ENCODE measurements at regions of chr3 and their contacts with region 1.

Region 1: DNA sequence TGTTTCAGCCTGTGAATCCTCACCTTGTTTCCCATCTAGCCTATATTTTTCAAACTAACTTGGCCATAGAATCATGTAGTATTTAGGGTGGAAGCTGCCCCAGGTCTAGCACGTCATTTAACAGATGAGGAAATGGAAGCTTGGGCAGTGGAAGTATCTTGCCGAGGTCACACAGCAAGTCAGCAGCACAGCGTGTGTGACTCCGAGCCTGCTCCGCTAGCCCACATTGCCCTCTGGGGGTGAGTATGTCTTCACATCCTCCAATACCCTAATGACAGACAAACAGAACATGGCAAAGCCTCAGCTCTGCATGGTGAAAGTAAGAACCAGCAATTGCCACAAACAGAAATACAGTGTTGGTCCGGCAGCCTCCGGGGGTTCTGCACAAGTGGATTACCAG is 2.2 kb upstream of the CCR5 start:
- ATAC-seq: peak in 1 of 8 experiments; percentile 64
- H3K4me3 ChIP-seq: no peak overlapping the region
- H3K27ac ChIP-seq: no peak overlapping the region
- H3K4me1 ChIP-seq: no peaks in the 10 kb centered on the region

Region 2: GRCh38 chr3:46078712-46079400 is 289.7 kb before region 1 on chr3:
- in situ Hi-C with region 1: loop called in 2 of 9 experiments (anchors 10 to 25 kb)
- ATAC-seq: peak; percentile 83 to 100 (median 94)
- H3K4me3 ChIP-seq: no peak overlapping the region
- H3K27ac ChIP-seq: no peak overlapping the region
- H3K4me1 ChIP-seq: no peaks in the 10 kb centered on the region

Region 3: GRCh38 chr3:46214751-46215352 is 153.7 kb before region 1 on chr3:
- in situ Hi-C with region 1: loop called in 1 of 9 experiments (anchors 10 kb)
- ATAC-seq: peak in 1 of 8 experiments; percentile 29
- H3K4me3 ChIP-seq: no peak overlapping the region
- H3K27ac ChIP-seq: no peak overlapping the region
- H3K4me1 ChIP-seq: no peaks in the 10 kb centered on the region

Measured in motor neuron (in vitro differentiated cells).